ENCODE measurements at regions of chr11 and their contacts with region 1.

Region 1: DNA sequence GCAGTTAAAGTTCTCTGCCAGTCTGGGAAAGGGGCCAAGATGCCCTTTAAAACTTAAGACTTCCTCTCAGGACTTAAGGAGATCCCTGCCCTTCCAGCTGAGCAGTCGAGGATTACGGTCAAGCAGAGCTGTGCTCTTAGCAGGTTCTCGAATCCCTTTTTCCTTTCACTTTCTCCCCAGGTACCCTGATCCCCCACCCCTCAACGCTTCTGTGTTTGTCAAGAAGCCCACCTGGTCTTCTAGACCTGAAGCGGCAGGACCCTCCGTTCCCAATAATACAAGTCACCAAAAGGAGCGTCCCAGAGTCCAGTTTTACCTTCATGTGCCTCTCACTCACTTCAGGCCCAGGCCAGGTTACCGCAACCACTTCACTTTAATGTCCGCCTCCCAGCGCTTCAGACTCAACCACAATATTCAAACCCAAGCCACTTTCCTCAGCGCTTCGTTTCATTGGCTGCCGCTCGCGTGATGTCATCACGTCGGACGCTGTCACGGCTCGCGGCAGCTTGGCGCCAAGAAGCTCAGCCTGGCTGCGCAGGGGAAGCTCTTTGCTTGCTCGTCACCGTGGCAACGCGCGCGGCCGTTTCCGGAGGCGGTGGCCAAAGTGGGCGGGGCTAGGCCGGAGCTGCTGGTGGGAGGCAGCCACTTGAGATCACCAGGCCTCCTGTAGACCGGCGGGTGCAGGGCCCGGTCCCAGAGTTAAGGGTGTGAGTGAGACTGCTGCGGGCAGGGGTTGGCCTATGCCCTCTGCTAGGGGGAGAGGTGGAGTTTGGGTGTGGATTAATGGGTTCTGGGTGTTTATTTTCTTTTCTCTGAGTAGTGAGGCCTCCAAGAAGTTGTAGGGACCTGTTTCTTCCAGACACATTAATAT is at the starts of genes KIF18A and METTL15:
- DNase-seq: peak; percentile 99 to 100 (median 100)
- ATAC-seq: peak; percentile 100
- H3K4me3 ChIP-seq: peak within 1 kb of the TSS; percentile 35 to 87 (median 60)
- H3K27ac ChIP-seq: peak within 1 kb of the TSS in 11 of 12 donors; percentile 26 to 86 (median 76)
- H3K4me1 ChIP-seq: peaks cover 0 to 44% (median 34%) of the 10 kb centered on the region in 12 donors
- H3K27me3 ChIP-seq: no peaks in the 10 kb centered on the region
- CTCF ChIP-seq: no peak
- POLR2A ChIP-seq: peak in 1 of 2 donors; percentile 55
- total RNA-seq, gene KIF18A: 0.10 to 1.7 (median 0.27) TPM in 6 of 9 donors, not detected in the others
- total RNA-seq, gene METTL15: 6.2 to 14.4 (median 10.2) TPM

Region 2: DNA sequence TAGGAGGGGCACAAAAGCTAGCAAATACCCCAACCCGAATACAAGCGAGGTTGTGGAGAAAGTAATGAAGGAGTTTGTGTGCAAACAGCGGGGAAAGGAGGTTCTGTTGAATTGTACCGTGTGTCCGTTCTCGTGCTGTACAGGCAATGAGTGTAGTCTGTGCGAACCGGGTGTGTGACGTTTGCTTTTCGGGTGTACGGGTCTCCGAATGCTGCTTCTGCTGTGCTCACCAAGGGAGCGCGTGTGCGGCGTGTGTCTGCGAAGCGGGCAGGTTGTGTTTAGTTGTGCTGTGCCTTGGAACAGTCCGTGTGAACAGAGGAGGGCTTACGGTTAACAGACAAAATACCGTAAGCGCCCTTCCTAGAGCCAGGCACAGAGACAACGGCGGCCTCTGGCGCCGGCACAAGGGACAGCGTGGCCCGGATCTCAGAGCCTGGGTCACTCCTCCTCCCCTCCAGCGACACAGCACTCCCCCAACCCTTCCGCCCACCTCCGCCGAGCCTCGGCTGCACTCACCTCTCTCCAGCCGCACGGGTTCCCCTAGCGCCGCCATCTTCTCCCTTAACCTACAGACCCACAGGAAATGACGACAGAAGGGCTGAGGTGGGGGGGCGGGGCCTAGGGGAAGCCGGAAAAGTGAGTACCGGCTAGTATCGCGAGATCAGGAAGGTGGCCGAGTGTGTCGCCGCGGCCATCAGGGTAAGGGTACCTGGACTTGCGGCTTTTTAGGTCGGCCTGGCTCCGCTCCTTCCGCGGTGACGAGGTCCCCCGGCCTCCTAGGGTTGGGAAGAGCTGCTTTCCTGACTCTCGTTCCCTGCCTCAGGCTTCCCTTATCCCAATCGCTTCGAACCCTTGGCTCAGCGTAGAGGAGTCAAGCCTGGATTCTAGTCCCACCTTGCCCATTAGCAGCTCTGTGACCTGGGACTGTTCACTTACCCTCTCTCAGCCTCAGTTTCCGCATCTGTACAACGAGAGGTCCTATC is 601.5 kb before region 1 on chr11 and contains the start of gene LIN7C:
- intact Hi-C with region 1: loop called in 2 of 10 experiments (anchors 10 kb)
- DNase-seq: peak; percentile 96 to 97 (median 97)
- ATAC-seq: peak; percentile 97 to 99 (median 98)
- H3K4me3 ChIP-seq: peak within 1 kb of the TSS; percentile 59 to 99 (median 71)
- H3K27ac ChIP-seq: peak within 1 kb of the TSS; percentile 75 to 96 (median 92)
- H3K4me1 ChIP-seq: peaks cover 0 to 56% (median 35%) of the 10 kb centered on the region in 12 donors
- H3K27me3 ChIP-seq: no peaks in the 10 kb centered on the region
- CTCF ChIP-seq: peak in 3 of 12 donors; percentile 15 to 29 (median 28)
- POLR2A ChIP-seq: peak; percentile 41 to 91
- total RNA-seq, gene LIN7C: 13.2 to 24.1 (median 16.6) TPM

Region 3: GRCh38 chr11:27524155-27524554 is 583.8 kb before region 1 on chr11:
- intact Hi-C with region 1: loop called in 1 of 10 experiments (anchors 10 kb)
- DNase-seq: no peak
- ATAC-seq: no peak
- H3K4me3 ChIP-seq: no peak overlapping the region
- H3K27ac ChIP-seq: no peak overlapping the region
- H3K4me1 ChIP-seq: peaks cover 0 to 17% (median 1%) of the 10 kb centered on the region in 12 donors
- H3K27me3 ChIP-seq: no peaks in the 10 kb centered on the region
- CTCF ChIP-seq: peak in 4 of 12 donors; percentile 10 to 22 (median 18)
- POLR2A ChIP-seq: no peak

Region 4: GRCh38 chr11:27705873-27706820 is 401.8 kb before region 1 on chr11:
- intact Hi-C with region 1: loop called in 1 of 10 experiments (anchors 10 kb)
- DNase-seq: no peak
- ATAC-seq: no peak
- H3K4me3 ChIP-seq: no peak overlapping the region
- H3K27ac ChIP-seq: no peak overlapping the region
- H3K4me1 ChIP-seq: peaks cover 0 to 9% (median 5%) of the 10 kb centered on the region in 12 donors
- H3K27me3 ChIP-seq: peaks cover 0 to 25% (median 0%) of the 10 kb centered on the region in 9 donors
- CTCF ChIP-seq: peak; percentile 39 to 69 (median 54)
- POLR2A ChIP-seq: no peak

Region 5: GRCh38 chr11:28384418-28384817 is 276.4 kb after region 1 on chr11:
- intact Hi-C with region 1: no loop called
- DNase-seq: no peak
- ATAC-seq: no peak
- H3K4me3 ChIP-seq: no peak overlapping the region
- H3K27ac ChIP-seq: no peak overlapping the region
- H3K4me1 ChIP-seq: no peaks in the 10 kb centered on the region
- H3K27me3 ChIP-seq: no peaks in the 10 kb centered on the region
- CTCF ChIP-seq: no peak
- POLR2A ChIP-seq: no peak